ENCODE measurements at regions of chr2 and their contacts with region 1.

Region 1: GRCh38 chr2:105179469-105180372 is 61.8 kb upstream of the GPR45 start:
- DNase-seq: no peak
- ATAC-seq: no peak
- H3K4me3 Mint-ChIP-seq: no peak overlapping the region
- H3K27ac Mint-ChIP-seq: no peak overlapping the region
- H3K4me1 Mint-ChIP-seq: peaks cover 69% of the 10 kb centered on the region
- H3K27me3 Mint-ChIP-seq: no peaks in the 10 kb centered on the region
- CTCF ChIP-seq: no peak

Region 2: DNA sequence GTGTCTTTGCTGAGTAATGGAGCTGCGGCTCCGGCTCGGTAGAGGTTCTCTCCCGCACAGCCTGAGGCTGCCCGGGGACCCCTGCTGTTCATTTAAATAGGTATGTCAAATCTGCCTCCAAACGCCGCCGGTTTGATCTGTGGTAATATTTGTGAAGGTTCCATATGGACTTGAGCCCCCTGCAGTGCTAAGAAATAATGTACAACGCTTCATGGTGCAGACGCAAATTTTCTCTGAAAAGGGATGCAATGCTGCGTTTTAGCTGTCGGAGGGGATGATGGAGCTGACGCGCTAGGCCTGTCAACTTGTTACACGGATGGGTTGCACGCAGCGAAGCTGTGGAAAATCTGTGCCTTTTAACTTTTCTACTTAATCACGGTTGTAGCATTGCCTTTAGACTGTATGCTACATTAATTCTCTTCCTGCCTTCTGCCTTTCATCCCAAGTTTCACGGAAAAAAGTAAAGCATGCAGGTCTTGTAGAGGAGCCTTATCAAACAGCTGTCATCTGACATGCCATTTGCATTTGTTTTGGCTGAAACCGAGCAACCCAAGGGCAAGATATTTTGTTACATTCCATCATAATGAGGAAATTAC is 98.6 kb before region 1 on chr2:
- CTCF ChIA-PET with region 1: no interaction called
- POLR2A ChIA-PET with region 1: no interaction called
- intact Hi-C with region 1: no loop called
- DNase-seq: no peak
- ATAC-seq: no peak
- H3K4me3 Mint-ChIP-seq: no peak overlapping the region
- H3K27ac Mint-ChIP-seq: no peak overlapping the region
- H3K4me1 Mint-ChIP-seq: no peaks in the 10 kb centered on the region
- H3K27me3 Mint-ChIP-seq: no peaks in the 10 kb centered on the region
- CTCF ChIP-seq: no peak

Region 3: GRCh38 chr2:105129722-105130232 is 49.9 kb before region 1 on chr2:
- CTCF ChIA-PET with region 1: no interaction called
- POLR2A ChIA-PET with region 1: no interaction called
- intact Hi-C with region 1: loop called (anchors 1 kb)
- DNase-seq: no peak
- ATAC-seq: peak; percentile 94
- H3K4me3 Mint-ChIP-seq: no peak overlapping the region
- H3K27ac Mint-ChIP-seq: peak overlapping the region; percentile 16
- H3K4me1 Mint-ChIP-seq: peaks cover 24% of the 10 kb centered on the region
- H3K27me3 Mint-ChIP-seq: peaks cover 4% of the 10 kb centered on the region
- CTCF ChIP-seq: no peak

Measured in activated B cell treated with CpG ODN at 0.5 μM for 24 hours (primary cell).